ENCODE measurements at regions of chr13 and their contacts with region 1.

Region 1: GRCh38 chr13:42969558-42970172 is 22.4 kb downstream of the EPSTI1 start:
- DNase-seq: peak; percentile 90
- ATAC-seq: peak; percentile 79
- H3K4me3 Mint-ChIP-seq: no peak overlapping the region
- H3K27ac Mint-ChIP-seq: no peak overlapping the region
- H3K4me1 Mint-ChIP-seq: peaks cover 30% of the 10 kb centered on the region
- H3K27me3 Mint-ChIP-seq: no peaks in the 10 kb centered on the region

Region 2: GRCh38 chr13:43023289-43023951 is 53.8 kb after region 1 on chr13 and contains the start of gene DNAJC15:
- CTCF ChIA-PET with region 1: interaction called, 5 read pairs
- POLR2A ChIA-PET with region 1: no interaction called
- intact Hi-C with region 1: loop called (anchors 2 to 5 kb)
- DNase-seq: peak; percentile 90
- ATAC-seq: peak; percentile 95
- H3K4me3 Mint-ChIP-seq: peak within 1 kb of the TSS; percentile 99
- H3K27ac Mint-ChIP-seq: peak within 1 kb of the TSS; percentile 91
- H3K4me1 Mint-ChIP-seq: peaks cover 28% of the 10 kb centered on the region
- H3K27me3 Mint-ChIP-seq: no peaks in the 10 kb centered on the region
- total RNA-seq, gene DNAJC15: 13.0 to 20.8 TPM

Region 3: GRCh38 chr13:43132257-43132656 is 162.6 kb after region 1 on chr13:
- CTCF ChIA-PET with region 1: interaction called, 3 read pairs
- POLR2A ChIA-PET with region 1: no interaction called
- intact Hi-C with region 1: loop called in 1 of 2 experiments (anchors 2 kb)
- DNase-seq: peak; percentile 10
- ATAC-seq: peak; percentile 63
- H3K4me3 Mint-ChIP-seq: no peak overlapping the region
- H3K27ac Mint-ChIP-seq: no peak overlapping the region
- H3K4me1 Mint-ChIP-seq: peaks cover 11% of the 10 kb centered on the region
- H3K27me3 Mint-ChIP-seq: peaks cover 3% of the 10 kb centered on the region

Region 4: DNA sequence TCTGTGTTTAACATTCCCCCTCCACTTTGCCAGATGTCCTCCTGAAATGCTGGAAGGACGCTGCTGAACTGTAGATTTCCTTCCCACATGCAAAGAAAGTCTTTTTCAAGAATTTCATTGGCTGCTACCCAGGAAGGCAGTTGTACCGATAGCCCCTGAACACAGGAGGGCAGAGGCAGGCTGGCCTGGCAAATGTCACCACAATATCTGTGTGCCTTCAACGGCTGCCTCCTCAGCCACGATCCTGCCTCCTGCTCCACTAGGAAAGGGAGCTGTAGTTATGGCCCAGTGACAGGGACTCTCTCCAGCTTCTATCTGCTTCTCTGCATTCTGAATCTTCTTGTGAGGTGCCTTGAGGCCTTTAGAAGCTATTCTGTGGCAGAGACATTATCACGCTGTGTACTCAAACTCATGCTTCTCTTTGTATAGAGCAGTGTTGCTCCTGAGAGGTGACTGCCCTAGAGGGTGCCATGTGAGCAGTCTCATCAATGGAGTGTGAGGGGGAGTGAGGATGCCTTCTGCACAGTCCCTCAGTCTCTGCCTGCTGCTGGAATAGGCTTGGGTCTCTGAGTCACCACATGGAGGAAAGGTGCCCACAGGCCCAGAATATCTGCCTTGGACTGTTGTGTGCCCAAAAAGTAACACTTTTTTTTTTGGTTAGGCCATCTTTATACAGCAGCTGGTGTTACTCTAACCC is 333.5 kb after region 1 on chr13:
- CTCF ChIA-PET with region 1: no interaction called
- POLR2A ChIA-PET with region 1: no interaction called
- intact Hi-C with region 1: loop called in 1 of 2 experiments (anchors 10 kb)
- DNase-seq: peak; percentile 39
- ATAC-seq: no peak
- H3K4me3 Mint-ChIP-seq: no peak overlapping the region
- H3K27ac Mint-ChIP-seq: no peak overlapping the region
- H3K4me1 Mint-ChIP-seq: no peaks in the 10 kb centered on the region
- H3K27me3 Mint-ChIP-seq: peaks cover 14% of the 10 kb centered on the region